Naive thymus-derived CD4-positive, alpha-beta T cell (primary cell): ENCODE measurements at regions of chr17 and their contacts with region 1.

Region 1: GRCh38 chr17:8435245-8436168 is at the start of gene NDEL1:
- DNase-seq: peak; percentile 97 to 99 (median 99)
- ATAC-seq: peak; percentile 95
- H3K4me3 ChIP-seq: peak within 1 kb of the TSS; percentile 81
- H3K4me3 Mint-ChIP-seq: peak within 1 kb of the TSS; percentile 94 to 99 (median 96)
- H3K27ac ChIP-seq: peak within 1 kb of the TSS; percentile 100
- H3K27ac Mint-ChIP-seq: peak within 1 kb of the TSS; percentile 96 to 100 (median 98)
- H3K4me1 ChIP-seq: peaks cover 10 to 22% of the 10 kb centered on the region in 2 donors
- H3K4me1 Mint-ChIP-seq: peaks cover 9 to 46% (median 37%) of the 10 kb centered on the region in 7 donors
- H3K27me3 ChIP-seq: no peaks in the 10 kb centered on the region
- H3K27me3 Mint-ChIP-seq: no peaks in the 10 kb centered on the region
- total RNA-seq, gene NDEL1: 72.6 to 274 (median 116) TPM

Region 2: GRCh38 chr17:7931709-7932482 is 503.6 kb before region 1 on chr17 and contains the starts of genes CNTROB and TRAPPC1:
- CTCF ChIA-PET with region 1: no interaction called
- POLR2A ChIA-PET with region 1: no interaction called
- intact Hi-C with region 1: loop called in 1 of 2 experiments (anchors 10 kb)
- DNase-seq: peak; percentile 97 to 100 (median 99)
- ATAC-seq: peak; percentile 98
- H3K4me3 ChIP-seq: peak within 1 kb of the TSS; percentile 66
- H3K4me3 Mint-ChIP-seq: peak within 1 kb of the TSS; percentile 95 to 100 (median 96)
- H3K27ac ChIP-seq: peak within 1 kb of the TSS; percentile 88
- H3K27ac Mint-ChIP-seq: peak within 1 kb of the TSS; percentile 82 to 99 (median 96)
- H3K4me1 ChIP-seq: peaks cover 20 to 28% of the 10 kb centered on the region in 2 donors
- H3K4me1 Mint-ChIP-seq: peaks cover 31 to 60% (median 54%) of the 10 kb centered on the region in 7 donors
- H3K27me3 ChIP-seq: no peaks in the 10 kb centered on the region
- H3K27me3 Mint-ChIP-seq: no peaks in the 10 kb centered on the region
- total RNA-seq, gene CNTROB: 29.0 to 50.5 (median 33.6) TPM
- total RNA-seq, gene TRAPPC1: 71.4 to 216 (median 103) TPM

Region 3: GRCh38 chr17:8409966-8410864 is 25.3 kb before region 1 on chr17:
- CTCF ChIA-PET with region 1: interaction called, 7 read pairs
- POLR2A ChIA-PET with region 1: no interaction called
- intact Hi-C with region 1: loop called in 1 of 2 experiments (anchors 1 kb)
- DNase-seq: peak; percentile 56 to 81 (median 70)
- ATAC-seq: peak; percentile 84
- H3K4me3 ChIP-seq: no peak overlapping the region
- H3K4me3 Mint-ChIP-seq: peak overlapping the region in 1 of 10 donors; percentile 48
- H3K27ac ChIP-seq: no peak overlapping the region
- H3K27ac Mint-ChIP-seq: no peak overlapping the region
- H3K4me1 ChIP-seq: peaks cover 0 to 3% of the 10 kb centered on the region in 2 donors
- H3K4me1 Mint-ChIP-seq: peaks cover 9 to 26% (median 15%) of the 10 kb centered on the region in 7 donors
- H3K27me3 ChIP-seq: no peaks in the 10 kb centered on the region
- H3K27me3 Mint-ChIP-seq: peaks cover 0 to 37% (median 8%) of the 10 kb centered on the region in 5 donors

Region 4: GRCh38 chr17:8470447-8471047 is 35.0 kb after region 1 on chr17:
- CTCF ChIA-PET with region 1: no interaction called
- POLR2A ChIA-PET with region 1: no interaction called
- intact Hi-C with region 1: no loop called
- DNase-seq: no peak
- ATAC-seq: no peak
- H3K4me3 ChIP-seq: no peak overlapping the region
- H3K4me3 Mint-ChIP-seq: no peak overlapping the region
- H3K27ac ChIP-seq: no peak overlapping the region
- H3K27ac Mint-ChIP-seq: no peak overlapping the region
- H3K4me1 ChIP-seq: no peaks in the 10 kb centered on the region
- H3K4me1 Mint-ChIP-seq: peaks cover 0 to 15% (median 0%) of the 10 kb centered on the region in 7 donors
- H3K27me3 ChIP-seq: no peaks in the 10 kb centered on the region
- H3K27me3 Mint-ChIP-seq: no peaks in the 10 kb centered on the region

Region 5: GRCh38 chr17:8630802-8631553 is 195.5 kb after region 1 on chr17:
- CTCF ChIA-PET with region 1: no interaction called
- POLR2A ChIA-PET with region 1: no interaction called
- intact Hi-C with region 1: loop called in 1 of 2 experiments (anchors 2 kb)
- DNase-seq: peak; percentile 63 to 91 (median 82)
- ATAC-seq: peak; percentile 97
- H3K4me3 ChIP-seq: peak overlapping the region; percentile 64
- H3K4me3 Mint-ChIP-seq: peak overlapping the region; percentile 91 to 100 (median 99)
- H3K27ac ChIP-seq: peak overlapping the region; percentile 66
- H3K27ac Mint-ChIP-seq: peak overlapping the region in 7 of 9 donors; percentile 35 to 95 (median 80)
- H3K4me1 ChIP-seq: peaks cover 5% of the 10 kb centered on the region in 2 donors
- H3K4me1 Mint-ChIP-seq: peaks cover 0 to 18% (median 13%) of the 10 kb centered on the region in 7 donors
- H3K27me3 ChIP-seq: peaks cover 3 to 4% of the 10 kb centered on the region in 2 donors
- H3K27me3 Mint-ChIP-seq: peaks cover 30 to 67% (median 51%) of the 10 kb centered on the region in 5 donors

Region 6: GRCh38 chr17:8740486-8740885 is 305.0 kb after region 1 on chr17:
- CTCF ChIA-PET with region 1: no interaction called
- POLR2A ChIA-PET with region 1: no interaction called
- intact Hi-C with region 1: loop called in 1 of 2 experiments (anchors 1 kb)
- DNase-seq: peak; percentile 30 to 69 (median 45)
- ATAC-seq: peak; percentile 83
- H3K4me3 ChIP-seq: peak overlapping the region; percentile 61
- H3K4me3 Mint-ChIP-seq: peak overlapping the region; percentile 80 to 90 (median 85)
- H3K27ac ChIP-seq: peak overlapping the region; percentile 62
- H3K27ac Mint-ChIP-seq: peak overlapping the region; percentile 48 to 89 (median 80)
- H3K4me1 ChIP-seq: peaks cover 8 to 9% of the 10 kb centered on the region in 2 donors
- H3K4me1 Mint-ChIP-seq: peaks cover 13 to 21% (median 15%) of the 10 kb centered on the region in 7 donors
- H3K27me3 ChIP-seq: no peaks in the 10 kb centered on the region
- H3K27me3 Mint-ChIP-seq: peaks cover 0 to 19% (median 0%) of the 10 kb centered on the region in 5 donors